Sciatic nerve (tissue), 2 donors: ENCODE measurements at regions of chr18 and their contacts with region 1.

Region 1: GRCh38 chr18:839224-840022 is 27.4 kb upstream of the YES1 start:
- DNase-seq: peak; percentile 94
- ATAC-seq: peak; percentile 94

Region 2: GRCh38 chr18:741931-742512 is 97.4 kb before region 1 on chr18:
- intact Hi-C with region 1: loop called (anchors 10 kb)
- DNase-seq: no peak
- ATAC-seq: peak; percentile 74